Gastrocnemius medialis (tissue), 4 donors: ENCODE measurements at regions of chr5 and their contacts with region 1.

Region 1: DNA sequence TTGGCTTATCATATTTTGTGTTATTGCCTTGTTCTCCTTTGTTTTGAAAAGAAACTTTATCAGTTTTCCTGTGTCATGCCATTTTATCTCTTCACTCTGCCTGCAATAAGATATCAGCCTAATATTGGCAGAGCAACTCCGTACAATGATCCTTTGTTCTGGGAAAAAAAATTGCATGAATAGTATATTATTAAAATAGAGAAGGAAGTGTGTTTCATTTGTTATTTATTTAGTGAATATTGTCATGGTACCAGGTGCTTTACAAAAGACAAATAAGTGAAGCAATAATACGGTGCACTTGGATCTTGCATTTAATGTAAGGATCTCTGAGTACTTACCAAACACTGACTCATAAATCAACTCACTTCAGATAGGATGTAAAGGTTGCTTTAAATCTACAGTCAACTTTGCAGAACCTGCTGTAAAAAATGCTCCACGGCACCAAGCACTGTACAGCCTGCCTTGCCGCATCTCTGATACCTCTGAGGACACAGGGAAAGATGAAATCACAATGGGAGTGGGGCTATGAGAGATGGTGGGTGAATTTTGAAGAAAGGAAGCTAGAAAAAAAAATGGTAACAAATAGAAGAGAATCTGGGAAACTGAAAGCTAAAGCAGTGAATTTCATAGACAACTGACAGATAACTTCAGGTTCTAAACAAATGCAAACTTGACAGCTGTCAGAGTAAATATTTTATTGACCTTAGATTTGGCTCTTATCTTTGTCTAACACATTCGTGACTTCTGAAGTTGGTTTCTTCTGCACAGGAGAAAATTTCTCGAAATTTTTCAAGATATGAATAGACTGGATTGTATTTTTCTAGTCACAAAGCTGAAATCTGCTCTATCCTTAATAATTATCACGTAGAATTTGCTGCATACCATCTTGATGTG is 232.1 kb downstream of the ENC1 start:
- DNase-seq: no peak
- ATAC-seq: no peak
- H3K4me3 ChIP-seq: no peak overlapping the region
- H3K27ac ChIP-seq: peak overlapping the region in 2 of 4 donors; percentile 22 to 65
- H3K4me1 ChIP-seq: peaks cover 52 to 65% of the 10 kb centered on the region in 2 donors
- H3K27me3 ChIP-seq: no peaks in the 10 kb centered on the region
- CTCF ChIP-seq: no peak
- POLR2A ChIP-seq: no peak

Region 2: DNA sequence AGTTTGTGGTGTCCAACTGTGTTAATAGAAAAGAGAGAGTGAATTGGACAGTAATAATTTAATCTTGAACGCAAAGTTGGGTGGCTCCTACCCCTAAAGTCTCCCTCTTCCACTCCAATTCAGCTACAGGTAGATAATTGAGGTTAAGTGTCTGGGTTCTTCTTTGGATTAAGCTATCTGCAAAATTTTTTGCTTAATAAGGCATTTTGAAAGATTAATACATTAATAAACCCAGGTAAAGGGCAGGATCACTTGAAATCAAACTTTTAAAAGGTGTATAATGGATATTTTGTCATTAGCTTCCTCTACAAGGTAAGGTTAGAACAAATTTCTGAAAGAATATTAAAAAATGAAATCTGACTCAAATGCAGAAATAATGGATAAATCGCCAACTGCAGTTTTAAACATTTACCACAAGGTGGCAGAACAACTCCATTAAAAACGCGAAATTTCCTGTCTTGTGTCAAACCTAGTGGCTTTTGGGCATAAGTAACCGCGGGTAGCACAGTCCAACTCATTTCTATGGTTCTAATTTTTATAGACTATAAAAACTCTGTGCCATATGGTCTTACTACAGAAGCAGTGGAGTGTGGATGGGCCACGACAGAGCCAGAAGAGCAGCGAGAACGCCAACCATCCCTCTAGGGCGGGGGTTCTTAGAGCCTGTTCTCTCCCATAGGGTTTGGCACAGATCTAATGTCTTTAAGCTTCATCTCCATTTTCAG is 505.9 kb before region 1 on chr5:
- in situ Hi-C with region 1: no loop called
- intact Hi-C with region 1: loop called (anchors 10 kb)
- DNase-seq: no peak
- ATAC-seq: peak in 1 of 2 donors; percentile 63
- H3K4me3 ChIP-seq: peak overlapping the region in 1 of 4 donors; percentile 14
- H3K27ac ChIP-seq: no peak overlapping the region
- H3K4me1 ChIP-seq: peaks cover 0 to 3% of the 10 kb centered on the region in 2 donors
- H3K27me3 ChIP-seq: no peaks in the 10 kb centered on the region
- CTCF ChIP-seq: peak; percentile 80 to 89 (median 84)
- POLR2A ChIP-seq: no peak

Region 3: GRCh38 chr5:74294231-74294705 is 114.1 kb before region 1 on chr5:
- in situ Hi-C with region 1: no loop called
- intact Hi-C with region 1: loop called (anchors 5 kb)
- DNase-seq: no peak
- ATAC-seq: no peak
- H3K4me3 ChIP-seq: no peak overlapping the region
- H3K27ac ChIP-seq: no peak overlapping the region
- H3K4me1 ChIP-seq: peaks cover 25 to 37% of the 10 kb centered on the region in 2 donors
- H3K27me3 ChIP-seq: no peaks in the 10 kb centered on the region
- CTCF ChIP-seq: no peak
- POLR2A ChIP-seq: no peak

Region 4: GRCh38 chr5:74378464-74378863 is 29.9 kb before region 1 on chr5:
- in situ Hi-C with region 1: no loop called
- intact Hi-C with region 1: loop called (anchors 1 kb)
- DNase-seq: peak in 1 of 2 donors; percentile 10
- ATAC-seq: peak; percentile 75 to 79
- H3K4me3 ChIP-seq: no peak overlapping the region
- H3K27ac ChIP-seq: no peak overlapping the region
- H3K4me1 ChIP-seq: peaks cover 50 to 55% of the 10 kb centered on the region in 2 donors
- H3K27me3 ChIP-seq: no peaks in the 10 kb centered on the region
- CTCF ChIP-seq: no peak
- POLR2A ChIP-seq: no peak

Region 5: DNA sequence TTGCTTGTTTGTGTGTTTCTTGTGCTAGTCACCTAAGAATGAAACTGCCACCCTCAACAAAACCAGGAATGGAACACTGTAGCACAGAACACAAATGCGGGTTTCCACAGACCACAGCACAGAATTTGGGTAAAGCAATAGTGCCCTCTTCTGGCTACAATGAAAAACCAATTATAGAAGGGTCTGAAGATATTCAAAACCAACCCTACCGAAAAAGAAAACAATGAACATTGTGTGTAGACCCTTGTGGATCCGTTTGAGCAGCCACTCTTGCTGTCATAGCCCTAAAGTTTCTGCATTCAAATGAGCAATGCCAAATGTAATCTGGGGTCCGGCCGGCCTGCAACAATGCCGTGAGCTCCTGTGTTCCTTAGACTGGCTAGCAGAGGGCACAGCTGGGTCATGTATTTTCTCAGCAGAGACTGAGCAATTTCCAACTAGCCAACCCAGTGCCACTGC is 240.5 kb after region 1 on chr5:
- in situ Hi-C with region 1: loop called in 2 of 4 experiments (anchors 5 to 25 kb)
- intact Hi-C with region 1: no loop called
- DNase-seq: no peak
- ATAC-seq: peak; percentile 87 to 96
- H3K4me3 ChIP-seq: no peak overlapping the region
- H3K27ac ChIP-seq: no peak overlapping the region
- H3K4me1 ChIP-seq: peaks cover 0 to 3% of the 10 kb centered on the region in 2 donors
- H3K27me3 ChIP-seq: no peaks in the 10 kb centered on the region
- CTCF ChIP-seq: peak; percentile 71 to 81 (median 76)
- POLR2A ChIP-seq: no peak